Cardiac septum (tissue), 1 donor: ENCODE measurements at regions of chr1 and their contacts with region 1.

Region 1: DNA sequence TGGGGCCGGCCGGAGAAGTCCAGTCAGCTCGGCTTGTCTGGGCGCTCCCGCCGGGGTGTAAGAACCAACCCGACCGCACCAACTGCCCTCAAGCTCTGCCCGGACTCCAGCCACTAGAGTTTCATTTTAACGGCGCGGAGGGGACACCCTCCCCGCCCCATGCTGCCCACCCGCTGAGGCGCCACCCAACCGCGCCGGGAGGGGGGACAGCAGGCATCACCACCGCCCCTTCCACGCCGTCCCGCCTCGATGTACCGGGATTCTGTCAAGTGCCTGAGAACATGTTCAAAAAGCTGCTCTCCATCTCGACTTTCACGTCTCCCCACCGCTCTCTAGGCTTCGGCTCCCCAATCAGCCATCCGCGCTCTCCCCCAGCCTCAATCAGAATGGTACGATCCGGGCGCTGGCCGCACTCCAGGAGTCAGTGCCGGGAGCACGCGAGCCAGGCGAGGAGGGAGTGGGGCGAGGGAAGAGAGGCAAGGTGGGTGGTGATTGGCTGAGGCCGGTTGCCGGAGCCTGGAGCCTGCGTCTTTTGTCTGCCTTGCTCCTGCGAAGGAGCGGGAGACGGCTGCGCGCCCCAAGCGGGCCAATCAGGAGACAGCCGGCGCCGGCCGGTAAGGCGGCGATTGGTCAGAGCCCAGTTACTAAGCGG is at the start of gene PIK3R3:
- DNase-seq: peak; percentile 98
- total RNA-seq, gene PIK3R3: 55.3 TPM

Region 2: DNA sequence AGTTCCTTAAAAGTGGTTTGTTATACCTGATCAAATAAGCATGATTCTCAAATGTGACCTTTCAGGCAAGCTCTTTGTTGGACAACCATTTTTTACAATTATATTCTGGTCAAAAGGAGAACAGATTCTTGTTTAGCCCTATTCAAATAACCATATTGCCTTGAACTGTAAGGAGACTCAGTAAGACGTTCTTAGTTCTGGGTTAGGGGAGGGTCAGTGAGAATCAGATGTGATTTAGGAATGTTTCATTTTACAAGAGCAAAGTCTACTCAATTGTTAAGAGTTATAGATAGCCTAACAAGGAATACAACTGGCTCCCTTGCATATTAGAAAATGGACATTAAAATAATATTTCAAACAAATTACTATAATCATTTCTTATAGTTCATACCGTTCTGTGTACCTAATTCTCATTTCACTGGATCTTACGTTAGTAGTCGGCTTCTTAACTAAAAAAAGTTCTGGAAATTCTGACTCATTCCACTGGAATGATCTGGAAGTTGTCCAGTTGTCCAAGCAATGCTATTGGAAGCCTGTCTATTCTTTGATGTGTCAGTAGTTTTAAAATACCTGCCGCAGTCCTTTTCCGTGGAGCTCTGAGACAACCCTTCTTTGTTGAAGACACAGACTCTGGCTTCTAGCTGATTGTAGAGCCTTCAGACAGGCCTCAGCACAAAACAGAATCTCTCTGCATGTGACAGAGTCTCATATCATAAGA is 240.4 kb before region 1 on chr1:
- intact Hi-C with region 1: loop called (anchors 5 kb)
- DNase-seq: no peak

Region 3: GRCh38 chr1:45913183-45913683 is 219.4 kb before region 1 on chr1:
- intact Hi-C with region 1: loop called (anchors 5 kb)
- DNase-seq: peak; percentile 77

Region 4: DNA sequence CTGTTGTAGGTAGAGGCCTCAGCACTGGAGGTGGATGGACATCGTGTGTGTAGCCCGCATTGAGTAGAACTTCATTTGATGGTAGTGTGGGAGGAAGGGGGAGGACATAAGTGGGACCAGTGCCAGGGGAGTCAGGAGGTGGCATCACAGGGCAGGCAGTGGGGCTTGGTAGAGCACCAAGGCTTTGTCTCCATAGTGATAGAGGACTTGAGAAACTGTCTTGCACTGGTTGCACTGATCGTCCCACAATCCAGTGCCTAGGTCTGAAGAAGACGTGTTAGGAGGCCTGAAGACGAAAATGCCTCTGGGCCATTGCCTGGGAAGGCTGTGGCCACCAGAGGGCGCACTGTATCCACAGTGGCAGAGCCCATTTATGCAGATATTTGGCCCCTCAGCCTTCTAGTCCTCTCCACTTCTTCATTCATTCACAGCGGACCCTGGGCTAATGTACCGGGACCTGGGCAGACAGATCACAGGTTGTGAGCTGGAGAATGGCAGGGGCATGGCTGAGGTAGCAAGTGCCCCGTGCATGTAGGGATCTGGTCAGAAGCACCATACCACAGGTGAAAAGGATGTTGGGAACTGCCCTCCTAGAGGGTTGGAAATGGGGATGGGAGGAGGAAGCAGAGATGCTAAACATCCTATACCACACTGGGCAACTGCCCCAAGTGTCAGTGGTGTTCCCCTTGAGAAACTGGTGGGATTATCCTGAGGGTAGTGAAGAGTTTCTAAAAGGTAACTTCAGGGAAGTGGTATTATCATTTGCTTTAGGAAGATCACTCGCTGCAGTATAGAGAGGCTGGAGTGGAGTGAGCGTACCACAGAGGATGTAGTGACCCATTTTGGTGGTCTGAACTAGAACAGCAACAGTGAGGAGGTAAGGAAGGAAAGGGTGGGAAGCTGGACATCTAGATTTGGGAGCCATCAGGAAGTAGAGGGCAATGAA is 95.5 kb before region 1 on chr1:
- intact Hi-C with region 1: loop called (anchors 5 kb)
- DNase-seq: peak; percentile 90

Region 5: GRCh38 chr1:46113948-46114347 is 18.7 kb before region 1 on chr1:
- intact Hi-C with region 1: no loop called
- DNase-seq: no peak

Region 6: DNA sequence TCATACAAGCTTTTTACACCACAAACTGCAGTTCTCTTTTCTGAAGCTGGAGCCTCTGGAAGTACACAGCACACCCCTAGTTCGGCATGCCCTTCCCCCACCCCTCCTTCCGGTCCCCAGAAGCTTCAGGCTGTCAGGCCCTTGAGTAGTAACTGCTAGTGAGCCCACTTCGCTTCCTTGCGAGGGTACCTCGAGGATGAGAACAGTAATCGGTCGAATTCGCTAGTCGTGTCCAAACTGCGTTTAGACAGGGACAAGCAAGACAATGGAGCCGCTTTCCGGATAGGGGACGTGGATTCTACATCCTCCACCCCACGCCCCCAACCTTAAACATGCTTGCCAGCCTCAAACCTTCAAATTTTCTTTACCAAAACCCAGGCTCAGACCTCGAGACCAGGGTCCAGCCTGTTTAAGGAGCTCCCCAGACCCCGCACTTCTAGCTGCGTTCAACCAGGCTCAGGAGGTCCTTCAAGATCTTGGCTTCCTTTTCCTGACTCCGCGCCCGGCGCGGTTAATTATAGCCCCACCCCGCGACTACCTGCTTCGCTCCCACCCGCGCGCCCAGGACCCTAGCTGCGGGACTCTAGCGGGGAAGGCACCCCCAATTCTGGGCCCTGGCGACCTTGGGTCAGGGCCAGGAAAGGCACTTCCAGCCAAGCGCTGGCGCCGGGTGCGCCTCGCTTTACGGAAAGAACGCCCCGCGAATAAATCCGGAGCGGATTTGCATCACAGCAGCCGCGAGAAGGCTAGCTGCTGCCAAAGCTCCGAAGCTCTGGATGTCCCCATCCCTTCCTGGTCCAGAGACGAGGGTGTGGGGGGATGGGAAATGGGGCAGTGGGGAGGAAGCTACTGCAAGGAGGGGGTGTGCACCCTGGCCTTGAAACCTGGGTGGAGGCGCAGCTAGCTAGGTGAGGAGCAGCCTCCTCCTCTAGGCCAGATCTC is 34.1 kb after region 1 on chr1:
- intact Hi-C with region 1: loop called (anchors 2 kb)
- DNase-seq: peak; percentile 83

Region 7: DNA sequence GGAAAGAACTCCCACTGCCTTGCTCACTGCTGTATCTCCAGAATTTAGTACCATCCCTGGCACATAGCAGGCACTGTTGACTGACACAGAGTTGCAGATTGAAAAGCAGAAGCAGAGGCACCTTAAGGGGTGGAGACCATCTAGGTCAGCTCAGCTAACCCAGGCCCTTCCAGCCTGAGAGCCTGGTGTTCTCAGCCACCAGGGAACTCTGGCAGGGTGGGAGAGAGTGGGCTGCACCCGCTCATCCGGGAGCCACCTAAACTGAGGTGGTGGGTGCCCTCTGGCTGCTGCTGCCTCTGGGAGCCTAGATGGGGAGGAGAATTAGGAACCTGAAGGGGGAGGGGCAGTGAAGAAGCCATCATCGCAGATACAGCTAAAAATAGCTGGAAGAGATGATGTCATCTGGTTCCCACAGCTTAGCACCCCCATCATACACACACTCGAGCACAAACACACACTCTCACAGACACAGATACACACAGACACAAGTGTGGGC is 40.8 kb after region 1 on chr1:
- intact Hi-C with region 1: loop called (anchors 2 kb)
- DNase-seq: no peak

Region 8: DNA sequence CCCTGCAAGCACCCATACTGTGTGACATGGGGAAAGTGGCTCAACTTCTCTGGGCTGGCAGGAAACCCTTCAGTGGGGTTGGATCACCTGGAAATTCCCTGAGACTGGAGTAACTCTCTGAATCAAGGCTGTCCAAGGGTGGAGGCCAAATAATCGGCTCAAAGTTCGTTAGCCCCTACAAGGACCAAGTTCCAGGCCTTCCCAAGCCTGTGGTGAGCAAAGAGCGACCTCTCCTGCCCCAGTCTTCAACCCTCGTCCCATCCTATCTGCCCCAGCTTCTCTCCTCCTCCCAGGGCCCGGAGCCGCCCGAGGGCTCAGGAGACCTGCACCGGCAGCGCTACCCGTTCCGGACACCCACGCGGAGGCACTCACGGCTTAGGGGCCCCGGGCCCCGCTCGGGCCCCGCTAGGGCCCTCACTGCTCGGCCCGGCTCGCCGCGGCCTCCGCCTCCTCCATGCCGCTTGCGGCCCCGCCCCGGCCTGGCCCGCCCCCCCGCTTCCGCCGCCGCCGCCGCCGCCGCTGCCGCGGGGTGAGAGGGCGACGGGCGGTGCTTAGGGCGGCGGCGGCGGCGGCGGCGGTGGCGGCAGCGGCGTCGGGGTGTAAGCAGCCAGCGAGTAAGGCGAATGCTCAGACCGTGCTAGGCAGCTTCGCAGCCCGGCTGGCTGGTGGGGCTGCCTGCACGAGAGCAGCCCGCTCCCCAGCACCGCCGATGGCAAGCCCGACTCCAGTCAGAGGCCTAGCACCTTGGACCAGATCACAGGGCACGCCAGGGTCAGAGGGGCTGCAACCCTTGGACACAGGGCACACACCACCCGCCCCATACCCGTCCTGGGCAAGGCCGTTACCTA is 65.5 kb after region 1 on chr1 and contains the start of gene POMGNT1:
- intact Hi-C with region 1: no loop called
- DNase-seq: peak; percentile 90
- total RNA-seq, gene POMGNT1: 139 TPM

Region 9: GRCh38 chr1:46379996-46380395 is 247.3 kb after region 1 on chr1:
- intact Hi-C with region 1: no loop called
- DNase-seq: no peak